HEK293 (cell line): ENCODE measurements at regions of chr2 and their contacts with region 1.

Region 1: DNA sequence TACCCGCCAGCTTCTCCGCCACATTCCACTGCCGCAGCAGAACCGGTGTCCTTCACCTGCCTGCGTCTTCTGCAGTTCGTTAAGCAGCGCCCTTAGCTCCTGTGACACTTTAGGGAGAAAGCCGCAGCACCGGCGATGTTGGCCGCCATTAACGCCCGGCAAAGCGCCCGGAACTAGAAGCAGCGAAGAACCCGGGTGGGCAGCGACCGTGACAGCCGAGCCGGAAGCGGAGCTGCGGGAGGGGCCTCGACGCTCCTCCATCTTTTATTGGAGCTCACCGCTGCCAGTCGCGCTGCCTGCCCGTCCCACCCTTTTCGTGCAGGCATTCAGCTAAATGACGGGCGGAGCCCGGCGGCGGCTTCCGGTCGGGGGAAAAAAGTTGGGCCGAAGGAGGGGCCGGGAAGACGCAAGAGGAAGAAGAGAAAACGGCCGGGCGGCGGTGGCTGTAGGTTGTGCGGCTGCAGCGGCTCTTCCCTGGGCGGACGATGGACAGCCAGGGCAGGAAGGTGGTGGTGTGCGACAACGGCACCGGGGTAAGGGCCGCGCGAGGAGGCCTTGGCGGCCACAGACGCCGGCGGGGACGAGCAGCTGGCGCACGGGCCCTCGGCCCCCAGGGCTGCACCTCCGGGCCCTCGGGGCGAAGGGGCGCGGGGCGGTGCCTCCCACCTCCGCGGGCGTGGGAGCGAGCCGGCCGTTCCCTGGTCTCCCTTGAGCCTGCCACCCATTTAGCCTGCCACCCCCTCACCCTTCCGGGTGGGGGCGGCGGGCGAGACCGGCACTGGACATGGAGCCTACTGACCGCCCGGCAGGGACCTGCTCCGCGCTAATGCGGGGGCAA is at the start of gene ACTR2:
- H3K4me3 ChIP-seq: peak within 1 kb of the TSS; percentile 95
- H3K27ac ChIP-seq: peak within 1 kb of the TSS; percentile 86
- H3K4me1 ChIP-seq: 0 out of 2 replicates have a peak, but pooled peaks cover 8% of the 10 kb centered on the region
- CTCF ChIP-seq: no peak; the same call in 1 of the 2 replicates

Region 2: GRCh38 chr2:65129826-65130663 is 97.6 kb before region 1 on chr2 and contains the start of gene RAB1A:
- CTCF ChIA-PET with region 1: no interaction called
- POLR2A ChIA-PET with region 1: interaction called, 29 read pairs
- H3K4me3 ChIP-seq: peak within 1 kb of the TSS; percentile 92
- H3K27ac ChIP-seq: peak within 1 kb of the TSS; percentile 90
- H3K4me1 ChIP-seq: peaks cover 22% of the 10 kb centered on the region
- CTCF ChIP-seq: peak; percentile 82

Region 3: DNA sequence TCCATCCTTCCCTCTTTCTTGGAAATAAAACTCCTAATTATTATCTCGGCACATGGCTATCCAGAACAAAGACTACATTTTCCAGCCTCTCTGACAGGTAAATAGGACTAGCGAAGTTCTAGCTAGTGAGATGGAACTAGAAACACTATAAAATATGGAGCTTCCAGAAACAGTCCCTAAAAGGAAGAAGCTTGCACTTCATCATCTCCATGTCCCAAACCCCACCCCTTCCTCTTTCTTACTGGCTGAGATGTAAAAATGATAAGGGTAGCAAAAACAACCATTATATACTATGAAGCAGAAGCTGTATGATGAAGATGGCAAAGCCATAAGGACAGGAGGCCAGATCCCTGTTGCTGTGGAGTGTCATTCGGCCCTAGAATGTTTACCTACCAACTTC is 11.7 kb before region 1 on chr2:
- CTCF ChIA-PET with region 1: no interaction called
- POLR2A ChIA-PET with region 1: interaction called, 15 read pairs
- H3K4me3 ChIP-seq: no peak overlapping the region
- H3K27ac ChIP-seq: no peak overlapping the region
- H3K4me1 ChIP-seq: peaks cover 4% of the 10 kb centered on the region; the same call in 1 of the 2 replicates
- CTCF ChIP-seq: no peak